ENCODE measurements at regions of chr5 and their contacts with region 1.

Region 1: GRCh38 chr5:74648835-74649293 is 8.3 kb upstream of the ENC1 start:
- DNase-seq: no peak
- ATAC-seq: peak; percentile 91
- H3K4me3 ChIP-seq: no peak overlapping the region
- H3K27ac ChIP-seq: no peak overlapping the region
- H3K4me1 ChIP-seq: peaks cover 0 to 3% of the 10 kb centered on the region in 2 donors
- H3K27me3 ChIP-seq: no peaks in the 10 kb centered on the region

Region 2: GRCh38 chr5:73591102-73591695 is 1057.7 kb before region 1 on chr5:
- intact Hi-C with region 1: loop called in 1 of 2 experiments (anchors 10 kb)
- DNase-seq: no peak
- ATAC-seq: peak; percentile 88
- H3K4me3 ChIP-seq: no peak overlapping the region
- H3K27ac ChIP-seq: no peak overlapping the region
- H3K4me1 ChIP-seq: no peaks in the 10 kb centered on the region
- H3K27me3 ChIP-seq: no peaks in the 10 kb centered on the region

Region 3: DNA sequence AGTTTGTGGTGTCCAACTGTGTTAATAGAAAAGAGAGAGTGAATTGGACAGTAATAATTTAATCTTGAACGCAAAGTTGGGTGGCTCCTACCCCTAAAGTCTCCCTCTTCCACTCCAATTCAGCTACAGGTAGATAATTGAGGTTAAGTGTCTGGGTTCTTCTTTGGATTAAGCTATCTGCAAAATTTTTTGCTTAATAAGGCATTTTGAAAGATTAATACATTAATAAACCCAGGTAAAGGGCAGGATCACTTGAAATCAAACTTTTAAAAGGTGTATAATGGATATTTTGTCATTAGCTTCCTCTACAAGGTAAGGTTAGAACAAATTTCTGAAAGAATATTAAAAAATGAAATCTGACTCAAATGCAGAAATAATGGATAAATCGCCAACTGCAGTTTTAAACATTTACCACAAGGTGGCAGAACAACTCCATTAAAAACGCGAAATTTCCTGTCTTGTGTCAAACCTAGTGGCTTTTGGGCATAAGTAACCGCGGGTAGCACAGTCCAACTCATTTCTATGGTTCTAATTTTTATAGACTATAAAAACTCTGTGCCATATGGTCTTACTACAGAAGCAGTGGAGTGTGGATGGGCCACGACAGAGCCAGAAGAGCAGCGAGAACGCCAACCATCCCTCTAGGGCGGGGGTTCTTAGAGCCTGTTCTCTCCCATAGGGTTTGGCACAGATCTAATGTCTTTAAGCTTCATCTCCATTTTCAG is 746.4 kb before region 1 on chr5:
- intact Hi-C with region 1: loop called (anchors 2 kb)
- DNase-seq: no peak
- ATAC-seq: peak; percentile 81
- H3K4me3 ChIP-seq: no peak overlapping the region
- H3K27ac ChIP-seq: no peak overlapping the region
- H3K4me1 ChIP-seq: no peaks in the 10 kb centered on the region
- H3K27me3 ChIP-seq: no peaks in the 10 kb centered on the region

Region 4: DNA sequence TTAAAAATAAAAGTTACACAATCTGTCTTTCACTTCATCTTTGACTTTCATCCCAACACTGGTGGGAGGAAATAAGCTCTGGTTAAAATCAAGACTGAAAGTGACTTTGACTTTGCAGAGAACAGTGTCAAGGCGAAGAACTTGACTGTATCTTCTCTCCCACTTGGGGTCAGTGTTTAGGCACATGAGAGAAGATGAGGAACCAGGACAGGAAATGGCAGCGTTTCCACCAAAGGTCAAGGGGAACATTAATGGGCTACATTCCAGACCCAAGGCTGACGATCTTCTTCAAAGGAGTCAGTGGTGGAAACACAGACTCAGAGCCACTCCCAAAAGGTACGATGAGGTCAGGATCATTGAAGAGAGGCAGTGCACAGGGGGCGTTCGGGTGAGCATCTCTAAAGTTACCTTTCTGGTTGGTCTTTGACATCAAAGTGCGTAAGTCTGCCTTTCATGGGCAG is 613.3 kb before region 1 on chr5:
- intact Hi-C with region 1: loop called in 1 of 2 experiments (anchors 5 kb)
- DNase-seq: no peak
- ATAC-seq: peak; percentile 66
- H3K4me3 ChIP-seq: no peak overlapping the region
- H3K27ac ChIP-seq: no peak overlapping the region
- H3K4me1 ChIP-seq: no peaks in the 10 kb centered on the region
- H3K27me3 ChIP-seq: no peaks in the 10 kb centered on the region